Heart left ventricle (tissue), 16 donors: ENCODE measurements at regions of chr2 and their contacts with region 1.

Region 1: DNA sequence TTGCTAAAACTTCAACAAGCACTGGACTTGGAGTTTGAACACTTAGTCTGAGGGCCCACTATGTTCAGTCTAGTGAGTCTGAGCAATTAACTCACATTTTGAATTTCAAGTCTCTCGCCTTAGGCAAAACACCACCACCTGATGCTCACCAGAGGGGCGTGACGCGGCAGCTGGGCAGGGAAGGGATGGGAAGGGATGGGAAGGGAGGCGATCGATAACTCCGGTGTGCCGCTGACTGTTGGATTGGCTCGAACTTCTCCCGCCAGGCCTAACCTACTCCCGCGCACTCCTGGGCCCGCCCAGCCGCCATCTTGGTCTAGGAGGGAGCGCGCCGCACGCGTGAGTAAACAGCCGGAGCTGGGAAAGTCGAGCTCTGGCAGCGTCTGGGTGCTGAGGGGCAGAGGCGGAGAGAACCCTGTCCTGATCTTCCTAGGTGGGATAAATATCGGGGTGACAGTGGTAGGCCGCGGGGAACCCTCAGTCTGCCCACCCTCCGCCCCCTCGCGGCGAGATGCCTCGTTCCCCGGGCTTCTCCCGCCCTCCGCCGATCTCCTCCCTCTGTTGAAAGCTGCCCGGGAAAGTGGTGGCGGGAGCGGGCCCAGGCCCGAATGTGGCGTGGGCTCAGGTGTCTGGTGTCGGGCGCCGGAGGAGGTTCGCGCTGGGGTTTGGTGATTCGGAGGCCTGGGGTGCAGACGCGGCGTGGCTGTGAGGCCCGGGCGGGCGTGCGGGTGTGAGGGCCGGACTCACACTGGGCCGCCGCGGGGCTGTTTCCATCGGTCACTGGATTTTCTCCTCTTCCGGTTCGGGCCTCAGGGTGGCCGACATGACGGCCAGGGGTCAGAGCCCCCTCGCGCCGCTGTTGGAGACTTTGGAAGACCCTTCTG is at the start of gene RIF1:
- DNase-seq: peak; percentile 88 to 92 (median 91)
- ATAC-seq: peak; percentile 99 to 100 (median 100)
- H3K4me3 ChIP-seq: peak within 1 kb of the TSS; percentile 55 to 99 (median 92)
- H3K27ac ChIP-seq: peak within 1 kb of the TSS; percentile 78 to 97 (median 92)
- H3K4me1 ChIP-seq: peaks cover 0 to 18% (median 8%) of the 10 kb centered on the region in 12 donors
- H3K27me3 ChIP-seq: no peaks in the 10 kb centered on the region
- CTCF ChIP-seq: peak; percentile 48 to 95 (median 64)
- POLR2A ChIP-seq: no peak
- total RNA-seq, gene RIF1: 11.3 to 23.9 (median 15.1) TPM

Region 2: GRCh38 chr2:149587220-149587949 is 1822.5 kb before region 1 on chr2 and contains the start of gene MMADHC:
- intact Hi-C with region 1: loop called in 2 of 10 experiments (anchors 10 kb)
- DNase-seq: peak; percentile 93 to 97 (median 96)
- ATAC-seq: peak; percentile 99
- H3K4me3 ChIP-seq: peak within 1 kb of the TSS; percentile 58 to 92 (median 81)
- H3K27ac ChIP-seq: peak within 1 kb of the TSS; percentile 84 to 98 (median 96)
- H3K4me1 ChIP-seq: peaks cover 4 to 50% (median 31%) of the 10 kb centered on the region in 12 donors
- H3K27me3 ChIP-seq: no peaks in the 10 kb centered on the region
- CTCF ChIP-seq: peak in 1 of 12 donors; percentile 11
- POLR2A ChIP-seq: peak in 1 of 2 donors; percentile 75
- total RNA-seq, gene MMADHC: 66.6 to 130 (median 117) TPM

Region 3: DNA sequence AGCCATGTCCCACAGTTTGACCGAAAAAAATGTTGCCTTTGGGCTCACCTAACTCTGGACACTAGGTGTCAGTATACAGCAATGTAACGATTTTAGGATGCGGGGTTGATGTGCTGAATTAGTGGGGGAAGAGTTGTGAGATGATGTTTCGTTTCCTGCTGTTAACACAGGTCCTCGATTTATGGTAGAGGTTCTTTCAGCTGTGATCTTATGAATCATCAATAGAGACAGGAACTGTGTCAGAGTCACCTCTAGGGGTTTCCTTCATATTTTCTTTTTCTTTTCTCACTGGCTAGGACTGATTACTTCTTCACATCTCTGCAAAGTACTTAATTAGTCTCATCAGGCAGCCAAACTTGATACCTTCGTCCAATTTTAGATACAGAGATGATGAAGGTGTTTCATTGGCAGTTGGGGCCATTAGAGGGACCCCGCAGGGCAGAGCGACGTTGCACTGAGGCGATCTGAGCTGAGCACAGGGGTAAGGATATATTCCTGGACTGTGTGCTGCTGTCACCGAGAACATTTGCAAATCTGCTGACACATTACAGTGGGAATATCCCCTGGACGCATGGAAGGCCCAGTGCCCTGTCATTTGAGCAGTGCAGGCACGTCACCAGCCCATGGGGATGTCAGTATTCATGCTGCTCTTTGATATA is 1812.0 kb before region 1 on chr2:
- intact Hi-C with region 1: loop called in 1 of 10 experiments (anchors 10 kb)
- DNase-seq: peak in 2 of 5 donors; percentile 16 to 23
- ATAC-seq: peak; percentile 73 to 97 (median 92)
- H3K4me3 ChIP-seq: peak overlapping the region in 9 of 12 donors; percentile 20 to 53 (median 33)
- H3K27ac ChIP-seq: no peak overlapping the region
- H3K4me1 ChIP-seq: peaks cover 0 to 11% (median 0%) of the 10 kb centered on the region in 12 donors
- H3K27me3 ChIP-seq: no peaks in the 10 kb centered on the region
- CTCF ChIP-seq: peak; percentile 67 to 88 (median 78)
- POLR2A ChIP-seq: no peak

Region 4: DNA sequence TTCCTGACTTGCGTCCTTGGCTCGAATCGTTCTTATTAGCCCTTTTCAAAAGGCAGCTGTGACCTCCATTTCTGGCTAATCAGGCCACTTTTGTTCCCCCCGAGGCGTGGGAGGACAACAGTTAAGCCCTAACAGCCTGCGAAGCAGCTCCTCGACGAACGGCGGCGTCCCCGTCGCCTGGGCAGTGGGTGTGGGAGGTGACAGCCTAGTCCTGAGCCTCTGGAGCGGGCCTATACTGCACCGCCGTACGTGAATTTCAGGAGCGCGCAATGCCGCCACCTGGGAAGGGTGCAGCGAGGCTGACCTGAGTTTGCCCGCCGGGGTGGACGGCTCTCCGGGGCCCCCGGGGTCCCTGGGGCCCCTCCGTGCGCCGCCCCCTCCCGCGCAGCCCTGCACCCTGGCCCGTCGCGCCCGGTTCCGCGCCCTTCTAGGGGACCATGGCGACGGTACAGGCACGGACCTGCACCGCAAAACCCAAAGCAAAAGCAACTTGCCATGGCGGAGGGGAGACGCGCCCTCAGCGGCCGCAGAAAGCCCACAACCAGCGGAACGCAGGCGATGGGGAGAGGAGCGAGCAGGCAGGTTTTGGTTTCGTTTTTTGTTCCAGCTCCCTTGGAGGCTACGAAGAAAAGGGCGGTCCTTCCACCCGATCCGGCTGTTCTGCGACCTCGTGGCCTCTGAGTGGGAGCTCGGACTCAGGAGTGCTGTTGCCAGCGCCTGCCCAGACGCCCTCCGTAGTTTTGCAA is 148.4 kb before region 1 on chr2 and contains the start of gene RBM43:
- intact Hi-C with region 1: loop called in 2 of 10 experiments (anchors 10 kb)
- DNase-seq: peak; percentile 88 to 92 (median 91)
- ATAC-seq: peak; percentile 91 to 97 (median 97)
- H3K4me3 ChIP-seq: peak within 1 kb of the TSS; percentile 75 to 99 (median 84)
- H3K27ac ChIP-seq: peak within 1 kb of the TSS; percentile 87 to 98 (median 94)
- H3K4me1 ChIP-seq: peaks cover 0 to 19% (median 5%) of the 10 kb centered on the region in 12 donors
- H3K27me3 ChIP-seq: no peaks in the 10 kb centered on the region
- CTCF ChIP-seq: peak in 1 of 12 donors; percentile 7
- POLR2A ChIP-seq: peak in 1 of 2 donors; percentile 21
- total RNA-seq, gene RBM43: 0.81 to 5.9 (median 1.9) TPM

Region 5: GRCh38 chr2:151289369-151290088 is 120.3 kb before region 1 on chr2 and contains the start of gene NMI:
- intact Hi-C with region 1: loop called in 8 of 10 experiments (anchors 1 to 10 kb)
- DNase-seq: peak; percentile 83 to 90 (median 86)
- ATAC-seq: peak; percentile 80 to 95 (median 93)
- H3K4me3 ChIP-seq: peak within 1 kb of the TSS; percentile 43 to 83 (median 70)
- H3K27ac ChIP-seq: peak within 1 kb of the TSS; percentile 86 to 100 (median 94)
- H3K4me1 ChIP-seq: peaks cover 0 to 52% (median 5%) of the 10 kb centered on the region in 12 donors
- H3K27me3 ChIP-seq: peaks cover 0 to 4% (median 0%) of the 10 kb centered on the region in 9 donors
- CTCF ChIP-seq: peak in 1 of 12 donors; percentile 15
- POLR2A ChIP-seq: peak in 1 of 2 donors; percentile 47
- total RNA-seq, gene NMI: 1.7 to 15.9 (median 3.7) TPM

Region 6: GRCh38 chr2:151363709-151364108 is 46.1 kb before region 1 on chr2:
- intact Hi-C with region 1: no loop called
- DNase-seq: peak in 3 of 5 donors; percentile 8 to 52 (median 22)
- ATAC-seq: peak in 3 of 4 donors; percentile 73 to 93 (median 90)
- H3K4me3 ChIP-seq: peak overlapping the region in 1 of 12 donors; percentile 6
- H3K27ac ChIP-seq: peak overlapping the region in 5 of 12 donors; percentile 1 to 50 (median 21)
- H3K4me1 ChIP-seq: no peaks in the 10 kb centered on the region
- H3K27me3 ChIP-seq: no peaks in the 10 kb centered on the region
- CTCF ChIP-seq: no peak
- POLR2A ChIP-seq: no peak